ENCODE measurements at regions of chr2 and their contacts with region 1.

Region 1: GRCh38 chr2:20135631-20136050 is 84.2 kb upstream of the LAPTM4A start:
- DNase-seq: no peak
- H3K4me3 ChIP-seq: no peak overlapping the region
- H3K27ac ChIP-seq: no peak overlapping the region
- H3K27me3 ChIP-seq: peaks cover 8% of the 10 kb centered on the region
- CTCF ChIP-seq: peak; percentile 91

Region 2: DNA sequence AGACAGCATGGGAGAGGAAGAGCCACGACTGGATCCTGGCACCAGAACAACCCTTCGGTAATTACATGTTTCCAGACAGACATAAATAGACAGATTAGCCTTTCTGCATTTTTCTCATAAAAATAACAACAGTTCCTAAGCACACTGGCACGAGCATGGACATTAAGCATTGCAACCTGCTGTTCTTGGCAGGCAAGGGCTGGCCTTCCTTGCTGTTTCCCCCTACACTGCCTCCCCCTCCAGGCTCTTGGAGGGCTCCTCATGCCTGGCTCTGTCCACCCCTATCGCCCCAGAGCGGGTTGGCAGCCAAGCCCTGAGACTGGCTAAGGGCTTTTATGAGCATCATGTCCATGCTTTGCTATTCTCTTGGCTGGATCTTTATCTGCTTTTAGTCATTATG is 323.5 kb before region 1 on chr2:
- CTCF ChIA-PET with region 1: no interaction called
- POLR2A ChIA-PET with region 1: no interaction called
- DNase-seq: no peak
- H3K4me3 ChIP-seq: no peak overlapping the region
- H3K27ac ChIP-seq: no peak overlapping the region
- H3K27me3 ChIP-seq: no peaks in the 10 kb centered on the region
- CTCF ChIP-seq: no peak

Region 3: GRCh38 chr2:19989681-19990415 is 145.8 kb before region 1 on chr2 and contains the start of gene WDR35:
- CTCF ChIA-PET with region 1: no interaction called
- POLR2A ChIA-PET with region 1: no interaction called
- DNase-seq: peak; percentile 61
- H3K4me3 ChIP-seq: peak within 1 kb of the TSS; percentile 89
- H3K27ac ChIP-seq: peak within 1 kb of the TSS; percentile 69
- H3K27me3 ChIP-seq: no peaks in the 10 kb centered on the region
- CTCF ChIP-seq: no peak
- polyA plus RNA-seq, gene WDR35: 6.7 and 9.1 TPM in 2 replicates

Region 4: GRCh38 chr2:20122908-20123307 is 12.7 kb before region 1 on chr2:
- CTCF ChIA-PET with region 1: interaction called, 16 read pairs
- POLR2A ChIA-PET with region 1: no interaction called
- DNase-seq: no peak
- H3K4me3 ChIP-seq: no peak overlapping the region
- H3K27ac ChIP-seq: no peak overlapping the region
- H3K27me3 ChIP-seq: peaks cover 9% of the 10 kb centered on the region
- CTCF ChIP-seq: no peak

Region 5: DNA sequence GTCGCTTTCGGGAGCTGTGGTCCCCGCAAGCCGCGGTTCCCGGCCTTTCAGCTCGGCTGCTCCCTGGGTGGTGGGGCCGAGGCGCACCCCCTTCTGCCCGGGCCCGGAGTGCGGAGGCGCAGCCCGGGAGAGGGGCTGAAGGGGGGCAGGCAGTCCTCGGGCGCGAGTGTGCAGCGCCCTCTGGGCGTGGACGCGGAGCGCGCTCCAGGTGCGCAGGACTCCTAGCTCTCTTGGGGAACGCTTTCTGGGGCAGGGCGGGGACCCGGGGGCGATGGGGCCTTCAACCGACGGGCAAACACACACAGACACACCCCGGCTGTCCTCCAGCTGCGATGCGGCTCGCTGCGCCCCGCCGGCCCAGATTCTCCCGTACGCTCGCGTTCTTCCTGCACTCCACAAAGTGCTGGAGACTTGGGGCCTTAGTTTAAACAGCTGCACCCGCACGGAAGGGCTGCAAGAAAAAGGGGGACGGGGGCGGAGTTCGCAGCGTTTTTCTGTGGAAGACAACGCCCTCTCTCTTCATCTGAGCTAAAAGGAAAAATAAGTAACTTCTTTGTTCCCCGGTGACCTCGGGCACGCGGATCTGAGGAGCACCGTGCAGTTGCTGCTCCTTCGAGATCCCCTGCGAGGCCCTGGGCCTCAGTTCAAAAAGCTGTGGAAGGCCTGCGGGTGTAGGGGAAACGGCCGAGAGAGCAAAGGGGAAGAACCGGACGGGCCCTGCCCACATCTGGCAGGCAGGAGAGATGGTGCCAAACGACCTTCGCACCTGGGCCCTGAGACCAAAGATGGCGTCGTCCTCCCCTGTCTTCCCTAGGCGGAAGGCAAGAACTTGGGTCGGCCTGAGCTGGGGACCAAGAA is 89.9 kb after region 1 on chr2:
- CTCF ChIA-PET with region 1: interaction called, 19 read pairs
- POLR2A ChIA-PET with region 1: no interaction called
- DNase-seq: no peak
- H3K4me3 ChIP-seq: peak overlapping the region; percentile 64
- H3K27ac ChIP-seq: no peak overlapping the region
- H3K27me3 ChIP-seq: no peaks in the 10 kb centered on the region
- CTCF ChIP-seq: peak; percentile 53

Measured in AG04450 (cell line).